ENCODE measurements at regions of chr9 and their contacts with region 1.

Region 1: DNA sequence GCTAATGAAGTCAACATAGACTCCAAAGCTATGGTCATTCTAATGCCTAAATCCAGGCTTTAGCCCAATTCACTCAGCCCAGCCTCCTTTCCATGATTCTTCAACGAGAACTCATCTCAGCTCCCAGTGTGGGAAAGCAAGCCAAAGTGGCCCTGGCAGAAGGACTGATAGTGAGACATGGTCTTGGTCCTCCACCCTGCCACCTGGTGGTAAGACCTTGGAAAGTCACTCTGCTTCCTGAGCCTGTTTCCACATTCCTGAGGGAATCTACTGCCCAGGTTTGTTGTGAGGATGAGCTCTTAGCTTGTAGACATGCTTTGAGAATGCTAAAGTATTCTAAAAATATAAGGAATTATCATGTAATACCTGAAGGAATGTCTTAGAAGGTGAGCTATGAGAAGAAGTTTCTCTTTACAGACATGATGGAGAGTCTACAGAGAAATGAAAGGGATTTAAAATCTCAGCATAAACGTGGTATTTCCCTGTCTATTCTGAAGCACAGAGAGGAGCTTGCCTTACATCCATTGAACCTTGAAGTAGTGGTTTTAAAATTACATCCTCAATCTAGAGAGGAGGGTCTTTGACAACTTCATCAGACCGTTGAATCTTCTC is 173.5 kb downstream of the TRIM32 start:
- DNase-seq: peak; percentile 51
- CTCF ChIP-seq: peak; percentile 74

Region 2: GRCh38 chr9:116471093-116471906 is 389.3 kb before region 1 on chr9:
- CTCF ChIA-PET with region 1: no interaction called
- POLR2A ChIA-PET with region 1: no interaction called
- DNase-seq: no peak
- CTCF ChIP-seq: no peak

Region 3: GRCh38 chr9:116594547-116594946 is 266.1 kb before region 1 on chr9:
- CTCF ChIA-PET with region 1: no interaction called
- POLR2A ChIA-PET with region 1: no interaction called
- DNase-seq: no peak
- CTCF ChIP-seq: no peak

Region 4: DNA sequence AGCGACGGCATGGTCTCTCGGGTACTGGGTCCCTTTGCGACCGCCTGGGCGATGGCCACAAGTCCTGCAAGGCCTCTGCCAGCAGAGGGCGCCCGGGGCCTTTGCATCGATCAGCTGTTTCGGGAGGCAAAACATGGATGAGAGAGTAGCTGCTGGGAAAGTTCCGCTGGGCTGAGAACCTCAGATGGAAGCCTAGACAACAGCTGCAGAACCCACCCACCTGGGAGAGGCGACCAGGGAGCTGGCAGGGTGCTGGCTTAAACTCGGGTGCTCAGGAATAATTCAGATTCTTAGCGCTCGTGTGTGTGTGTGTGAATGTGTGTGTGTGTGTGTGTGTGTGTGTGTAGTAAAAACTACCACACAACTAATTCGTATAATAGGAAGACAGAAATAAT is 123.5 kb before region 1 on chr9:
- CTCF ChIA-PET with region 1: interaction called, 242 read pairs
- POLR2A ChIA-PET with region 1: no interaction called
- DNase-seq: peak; percentile 82
- CTCF ChIP-seq: peak; percentile 91

Region 5: GRCh38 chr9:116760636-116761035 is 100.0 kb before region 1 on chr9:
- CTCF ChIA-PET with region 1: interaction called, 12 read pairs
- POLR2A ChIA-PET with region 1: no interaction called
- DNase-seq: no peak
- CTCF ChIP-seq: no peak

Region 6: DNA sequence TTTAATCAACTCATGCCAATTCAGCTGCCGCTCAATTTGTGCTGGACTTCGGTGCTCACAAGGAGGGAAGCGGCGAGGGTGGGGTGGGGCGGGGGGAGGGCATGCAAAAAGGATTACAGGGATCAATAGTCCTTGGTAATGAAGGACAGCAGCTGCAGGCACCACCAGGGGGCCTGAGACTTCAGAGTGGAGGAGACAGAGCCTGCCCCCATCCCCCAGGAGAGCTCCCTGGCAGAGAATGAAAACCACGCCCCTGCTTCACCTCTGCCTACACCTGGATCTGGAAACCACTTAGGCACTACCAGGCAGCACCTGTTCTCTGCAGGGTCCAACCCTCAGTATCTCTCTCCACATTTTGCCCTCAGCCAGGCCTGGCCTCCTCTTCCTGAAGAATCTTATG is 18.0 kb before region 1 on chr9:
- CTCF ChIA-PET with region 1: interaction called, 87 read pairs
- POLR2A ChIA-PET with region 1: interaction called, 4 read pairs
- DNase-seq: no peak
- CTCF ChIP-seq: no peak

Region 7: DNA sequence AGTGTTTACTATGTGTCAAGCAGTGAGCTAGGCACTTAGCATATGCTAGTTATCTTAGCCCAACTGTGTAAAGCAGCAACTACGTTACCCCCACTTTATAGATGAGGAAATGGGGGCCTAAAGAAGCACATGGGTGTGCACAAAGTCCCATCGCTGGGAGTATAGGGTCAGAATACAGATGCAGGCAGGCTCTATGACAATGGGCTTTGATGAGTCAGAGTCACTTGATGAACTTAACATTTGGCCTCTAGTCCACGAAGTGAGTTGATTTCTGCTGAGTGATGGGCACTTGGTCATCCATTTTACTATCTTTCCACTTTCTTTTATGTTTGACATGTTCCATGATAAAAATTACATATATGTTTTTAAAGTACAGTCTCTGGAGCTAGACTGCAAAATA is 30.8 kb after region 1 on chr9:
- CTCF ChIA-PET with region 1: interaction called, 15 read pairs
- POLR2A ChIA-PET with region 1: no interaction called
- DNase-seq: no peak
- CTCF ChIP-seq: no peak

Region 8: DNA sequence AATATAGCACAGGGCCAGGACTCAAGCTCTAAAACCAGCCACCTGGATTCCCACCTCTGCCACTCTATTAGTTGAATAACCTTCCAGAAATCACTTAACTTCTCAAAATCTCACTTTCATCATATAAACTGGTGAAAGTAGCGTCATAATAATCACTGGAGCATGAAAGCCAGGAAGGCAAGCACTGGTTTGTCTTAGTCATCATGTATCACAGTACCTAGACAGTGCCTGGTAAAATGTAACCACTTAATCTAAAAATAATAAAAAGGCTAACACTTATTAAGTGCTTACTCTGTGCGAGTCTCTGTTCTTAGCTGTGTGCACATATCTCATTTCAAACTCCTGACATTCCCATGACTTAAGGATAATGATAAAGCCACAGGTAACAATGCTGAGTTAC is 444.8 kb after region 1 on chr9:
- CTCF ChIA-PET with region 1: no interaction called
- POLR2A ChIA-PET with region 1: no interaction called
- DNase-seq: no peak
- CTCF ChIP-seq: no peak